CD4-positive, alpha-beta T cell (primary cell): ENCODE measurements at regions of chr6 and their contacts with region 1.

Region 1: DNA sequence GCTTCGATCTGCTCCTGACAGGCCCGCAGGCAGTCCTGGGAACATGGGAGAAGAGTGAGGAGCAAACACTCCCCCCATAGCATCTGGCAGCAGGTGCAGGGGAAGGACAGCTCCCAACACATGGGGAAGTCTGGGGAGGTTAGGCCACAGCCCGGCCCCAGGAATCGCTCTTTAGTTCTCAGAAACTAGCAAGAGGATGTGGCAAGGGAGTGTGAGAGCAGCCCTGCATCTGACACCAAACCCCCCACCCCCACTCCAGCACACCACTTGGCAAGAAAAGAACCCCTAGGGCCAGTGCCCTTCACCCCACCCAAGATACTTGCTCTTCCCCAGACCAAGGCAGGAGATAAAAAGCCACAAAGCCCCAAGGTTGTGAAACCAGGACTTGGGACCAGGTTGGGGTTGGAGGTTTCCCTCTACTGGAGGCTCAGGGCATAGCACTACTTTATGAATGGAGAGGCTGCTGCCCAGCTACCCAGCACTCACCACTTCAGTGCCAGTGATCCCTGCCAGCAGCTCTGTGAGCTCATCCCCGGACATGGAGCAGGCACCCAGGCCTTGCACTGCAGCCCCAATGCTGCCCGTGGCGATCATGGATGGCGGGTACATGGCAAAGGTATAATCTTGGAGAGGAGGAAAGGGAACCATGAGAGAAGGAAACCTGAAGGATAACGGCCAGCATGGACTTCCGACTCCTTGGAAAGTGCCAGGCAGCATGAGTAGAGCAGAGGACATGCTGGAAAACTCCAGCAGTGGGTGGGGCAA is 5.4 kb downstream of the CCND3 start:
- DNase-seq: peak; percentile 32 to 95 (median 54)
- ATAC-seq: peak; percentile 53
- H3K4me3 ChIP-seq: peak overlapping the region; percentile 21
- H3K4me3 Mint-ChIP-seq: peak overlapping the region; percentile 85
- H3K27ac ChIP-seq: peak overlapping the region; percentile 63 to 64
- H3K27ac Mint-ChIP-seq: peak overlapping the region; percentile 93
- H3K4me1 ChIP-seq: peaks cover 73% of the 10 kb centered on the region
- H3K4me1 Mint-ChIP-seq: peaks cover 75% of the 10 kb centered on the region
- H3K27me3 ChIP-seq: no peaks in the 10 kb centered on the region
- H3K27me3 Mint-ChIP-seq: no peaks in the 10 kb centered on the region
- CTCF ChIP-seq: peak; percentile 77

Region 2: GRCh38 chr6:41787219-41787917 is 148.9 kb before region 1 on chr6 and contains the start of gene TOMM6:
- CTCF ChIA-PET with region 1: interaction called, 13 read pairs
- POLR2A ChIA-PET with region 1: interaction called, 7 read pairs
- intact Hi-C with region 1: loop called (anchors 1 to 5 kb)
- DNase-seq: peak; percentile 91 to 97 (median 93)
- ATAC-seq: peak; percentile 77
- H3K4me3 ChIP-seq: peak within 1 kb of the TSS; percentile 78
- H3K4me3 Mint-ChIP-seq: peak within 1 kb of the TSS; percentile 92
- H3K27ac ChIP-seq: peak within 1 kb of the TSS; percentile 87 to 89
- H3K27ac Mint-ChIP-seq: peak within 1 kb of the TSS; percentile 96
- H3K4me1 ChIP-seq: peaks cover 23% of the 10 kb centered on the region
- H3K4me1 Mint-ChIP-seq: peaks cover 27% of the 10 kb centered on the region
- H3K27me3 ChIP-seq: no peaks in the 10 kb centered on the region
- H3K27me3 Mint-ChIP-seq: no peaks in the 10 kb centered on the region
- CTCF ChIP-seq: peak; percentile 90
- total RNA-seq, gene TOMM6: 78.8 to 83.2 TPM

Region 3: DNA sequence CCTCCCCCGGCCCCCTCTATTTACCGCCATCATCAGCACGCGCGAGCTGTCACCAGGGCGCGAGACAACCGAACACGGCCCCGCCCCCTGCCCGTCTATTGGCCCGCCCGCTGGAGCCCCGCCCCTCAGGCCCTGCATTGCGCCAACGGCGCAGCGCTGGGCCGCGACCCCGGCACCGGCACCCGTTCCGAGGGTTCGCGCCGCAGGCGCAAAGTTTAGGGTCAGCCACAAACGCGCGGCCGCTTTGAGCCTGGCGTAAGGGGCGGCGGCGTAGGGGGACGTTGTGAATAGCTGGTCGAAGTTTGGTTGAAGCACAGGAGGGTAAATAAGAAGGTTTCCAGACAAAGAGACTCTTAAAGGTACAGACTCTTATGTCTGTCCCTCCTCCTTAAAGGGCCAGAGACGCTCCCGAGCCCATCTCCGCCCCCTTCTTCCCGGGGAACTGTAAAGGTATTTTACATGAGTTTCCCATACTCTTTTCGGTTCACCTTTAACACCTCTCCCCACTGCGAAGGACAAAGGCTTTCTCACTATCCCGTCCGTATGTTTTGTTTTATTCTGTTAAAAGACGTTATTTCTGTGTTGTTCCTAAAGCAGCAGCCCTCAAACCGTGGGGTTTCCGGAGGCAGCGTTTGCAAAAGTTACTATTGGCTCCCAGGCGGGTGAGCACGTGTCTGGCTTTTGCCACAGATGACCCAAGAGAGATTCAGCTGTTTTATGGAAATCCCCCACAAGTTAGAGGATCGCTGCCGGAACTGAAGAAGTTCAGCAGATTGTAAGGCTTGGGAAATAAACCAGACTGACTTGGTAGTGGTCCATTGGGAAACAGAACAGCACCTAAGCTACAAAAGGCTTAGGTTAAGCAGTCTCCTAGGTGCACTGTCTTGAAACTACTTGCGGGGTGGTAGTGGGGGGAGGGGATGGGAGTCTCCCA is 40.7 kb before region 1 on chr6 and contains the start of gene USP49:
- CTCF ChIA-PET with region 1: interaction called, 3 read pairs
- POLR2A ChIA-PET with region 1: interaction called, 5 read pairs
- intact Hi-C with region 1: loop called in 1 of 2 experiments (anchors 5 kb)
- DNase-seq: peak; percentile 79 to 96 (median 88)
- ATAC-seq: peak; percentile 93
- H3K4me3 ChIP-seq: peak within 1 kb of the TSS; percentile 84
- H3K4me3 Mint-ChIP-seq: no peak within 1 kb of the TSS
- H3K27ac ChIP-seq: peak within 1 kb of the TSS; percentile 77 to 80
- H3K27ac Mint-ChIP-seq: no peak within 1 kb of the TSS
- H3K4me1 ChIP-seq: peaks cover 21% of the 10 kb centered on the region
- H3K4me1 Mint-ChIP-seq: peaks cover 12% of the 10 kb centered on the region
- H3K27me3 ChIP-seq: no peaks in the 10 kb centered on the region
- H3K27me3 Mint-ChIP-seq: no peaks in the 10 kb centered on the region
- CTCF ChIP-seq: no peak
- total RNA-seq, gene USP49: 1.3 TPM

Region 4: DNA sequence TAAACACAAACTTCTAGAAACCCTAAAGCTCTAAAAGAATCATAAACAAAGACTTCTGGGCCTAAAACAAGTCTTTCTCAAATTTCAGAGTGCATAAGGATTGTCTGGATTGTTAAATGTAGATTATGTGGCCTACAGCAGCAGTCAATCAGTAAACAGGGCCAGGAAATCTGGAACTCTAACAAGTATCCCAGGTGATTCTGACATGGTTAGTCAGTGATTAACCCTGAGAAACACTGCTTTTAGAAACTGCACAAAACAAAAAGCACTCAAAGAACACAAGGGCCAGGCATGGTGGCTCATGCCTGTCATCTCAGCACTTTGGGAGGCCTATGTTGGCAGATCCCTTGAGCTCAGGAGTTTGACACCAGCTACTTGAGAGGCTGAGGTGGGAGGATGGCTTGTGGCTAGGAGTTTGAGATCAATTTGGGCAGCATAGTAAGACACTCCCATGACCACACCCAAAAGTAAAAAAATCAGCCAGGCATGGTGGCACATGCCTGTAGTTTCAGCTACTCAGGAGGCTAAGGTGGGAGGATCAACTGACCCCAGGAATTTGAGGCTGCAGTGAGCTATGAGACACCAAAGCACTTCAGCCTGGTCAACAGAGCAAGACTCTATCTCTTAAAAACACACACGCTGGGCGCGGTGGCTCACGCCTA is 21.3 kb before region 1 on chr6:
- CTCF ChIA-PET with region 1: no interaction called
- POLR2A ChIA-PET with region 1: no interaction called
- intact Hi-C with region 1: no loop called
- DNase-seq: no peak
- ATAC-seq: no peak
- H3K4me3 ChIP-seq: no peak overlapping the region
- H3K4me3 Mint-ChIP-seq: no peak overlapping the region
- H3K27ac ChIP-seq: no peak overlapping the region
- H3K27ac Mint-ChIP-seq: no peak overlapping the region
- H3K4me1 ChIP-seq: peaks cover 6% of the 10 kb centered on the region
- H3K4me1 Mint-ChIP-seq: peaks cover 10% of the 10 kb centered on the region
- H3K27me3 ChIP-seq: no peaks in the 10 kb centered on the region
- H3K27me3 Mint-ChIP-seq: no peaks in the 10 kb centered on the region
- CTCF ChIP-seq: no peak

Region 5: DNA sequence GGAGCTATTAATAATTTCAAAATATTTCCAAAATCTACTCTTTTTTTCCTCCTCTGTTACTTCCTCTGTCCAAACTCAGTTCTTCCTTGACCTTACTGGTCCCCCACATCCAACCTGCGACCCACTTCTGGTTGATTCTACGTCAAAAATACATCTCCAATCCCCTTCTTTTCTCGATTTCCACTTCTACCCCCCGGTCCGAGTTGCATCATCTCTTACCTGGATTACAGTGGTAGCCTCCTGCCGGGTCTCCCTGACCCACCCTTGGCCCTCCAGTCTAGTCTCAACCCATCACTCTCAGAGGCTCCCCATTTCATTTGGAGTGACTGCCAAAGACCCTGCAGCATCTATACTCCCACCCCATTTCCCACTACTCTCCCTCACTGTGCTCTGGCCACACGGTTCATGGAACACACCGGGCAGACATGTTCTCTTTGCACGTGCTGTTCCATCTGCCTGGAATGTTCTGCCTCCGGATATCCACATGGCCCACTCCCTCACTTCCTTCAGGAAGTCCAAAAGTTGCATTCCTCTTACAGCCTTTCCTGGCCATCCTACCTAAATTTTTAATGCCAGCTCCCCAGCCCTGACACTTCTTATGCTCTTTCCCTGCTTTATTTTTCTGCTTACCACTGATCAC is 11.4 kb after region 1 on chr6:
- CTCF ChIA-PET with region 1: interaction called, 4 read pairs
- POLR2A ChIA-PET with region 1: interaction called, 6 read pairs
- intact Hi-C with region 1: loop called in 1 of 2 experiments (anchors 2 kb)
- DNase-seq: no peak
- ATAC-seq: no peak
- H3K4me3 ChIP-seq: no peak overlapping the region
- H3K4me3 Mint-ChIP-seq: peak overlapping the region; percentile 25
- H3K27ac ChIP-seq: no peak overlapping the region
- H3K27ac Mint-ChIP-seq: peak overlapping the region; percentile 74
- H3K4me1 ChIP-seq: peaks cover 44% of the 10 kb centered on the region
- H3K4me1 Mint-ChIP-seq: peaks cover 53% of the 10 kb centered on the region
- H3K27me3 ChIP-seq: no peaks in the 10 kb centered on the region
- H3K27me3 Mint-ChIP-seq: no peaks in the 10 kb centered on the region
- CTCF ChIP-seq: no peak

Region 6: DNA sequence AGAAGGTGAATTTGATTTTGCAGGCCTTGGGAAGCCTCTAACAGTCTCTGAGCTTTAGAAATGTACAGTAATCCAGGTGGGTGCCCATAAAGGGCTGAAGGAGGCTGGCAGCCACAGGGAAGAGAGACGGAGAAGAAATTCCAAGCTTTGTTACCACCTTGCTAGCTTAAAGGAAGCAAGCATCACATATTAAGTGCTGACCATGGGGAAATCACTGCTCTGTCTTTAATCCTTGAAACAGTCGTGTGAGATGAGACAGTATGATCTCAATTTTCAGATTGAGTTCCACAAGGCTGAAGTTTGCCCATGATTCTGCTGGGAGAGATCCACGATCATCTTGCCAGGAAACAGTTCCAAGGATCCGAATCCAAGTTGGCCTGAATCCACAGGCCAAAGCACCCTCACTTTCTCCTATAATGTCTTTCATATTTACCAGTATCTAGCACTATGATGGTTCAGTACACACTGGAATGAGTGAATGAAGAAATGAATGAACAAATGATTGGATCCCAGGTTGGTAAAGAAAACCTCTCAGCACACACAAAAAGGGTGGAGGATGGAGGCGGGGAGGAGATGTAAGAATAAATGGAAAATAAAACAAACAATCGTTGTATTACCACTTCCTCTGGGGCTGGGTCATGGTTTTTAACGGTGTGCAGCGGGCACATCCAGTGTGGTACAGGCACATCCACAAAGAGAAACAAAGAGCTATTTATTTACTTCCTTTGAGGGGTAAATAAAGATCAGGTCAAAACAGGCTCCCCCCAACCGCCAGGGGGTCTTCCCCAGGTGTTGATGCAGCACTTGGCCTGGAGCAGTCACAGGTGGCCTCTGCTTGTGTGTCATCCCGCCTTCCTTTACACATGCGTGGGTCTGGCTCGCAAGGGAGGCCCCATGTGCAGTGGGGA is 85.8 kb after region 1 on chr6:
- CTCF ChIA-PET with region 1: no interaction called
- POLR2A ChIA-PET with region 1: interaction called, 20 read pairs
- intact Hi-C with region 1: loop called in 1 of 2 experiments (anchors 5 kb)
- DNase-seq: peak; percentile 31 to 87 (median 61)
- ATAC-seq: peak; percentile 85
- H3K4me3 ChIP-seq: peak overlapping the region; percentile 17
- H3K4me3 Mint-ChIP-seq: peak overlapping the region; percentile 78
- H3K27ac ChIP-seq: peak overlapping the region; percentile 48 to 78
- H3K27ac Mint-ChIP-seq: peak overlapping the region; percentile 94
- H3K4me1 ChIP-seq: peaks cover 87% of the 10 kb centered on the region
- H3K4me1 Mint-ChIP-seq: peaks cover 71% of the 10 kb centered on the region
- H3K27me3 ChIP-seq: no peaks in the 10 kb centered on the region
- H3K27me3 Mint-ChIP-seq: no peaks in the 10 kb centered on the region
- CTCF ChIP-seq: no peak

Region 7: GRCh38 chr6:42599558-42599957 is 663.3 kb after region 1 on chr6:
- CTCF ChIA-PET with region 1: no interaction called
- POLR2A ChIA-PET with region 1: no interaction called
- intact Hi-C with region 1: no loop called
- DNase-seq: no peak
- ATAC-seq: no peak
- H3K4me3 ChIP-seq: no peak overlapping the region
- H3K4me3 Mint-ChIP-seq: no peak overlapping the region
- H3K27ac ChIP-seq: no peak overlapping the region
- H3K27ac Mint-ChIP-seq: no peak overlapping the region
- H3K4me1 ChIP-seq: no peaks in the 10 kb centered on the region
- H3K4me1 Mint-ChIP-seq: peaks cover 24% of the 10 kb centered on the region
- H3K27me3 ChIP-seq: no peaks in the 10 kb centered on the region
- H3K27me3 Mint-ChIP-seq: no peaks in the 10 kb centered on the region
- CTCF ChIP-seq: no peak